ENCODE measurements at regions of chr7 and their contacts with region 1.

Region 1: DNA sequence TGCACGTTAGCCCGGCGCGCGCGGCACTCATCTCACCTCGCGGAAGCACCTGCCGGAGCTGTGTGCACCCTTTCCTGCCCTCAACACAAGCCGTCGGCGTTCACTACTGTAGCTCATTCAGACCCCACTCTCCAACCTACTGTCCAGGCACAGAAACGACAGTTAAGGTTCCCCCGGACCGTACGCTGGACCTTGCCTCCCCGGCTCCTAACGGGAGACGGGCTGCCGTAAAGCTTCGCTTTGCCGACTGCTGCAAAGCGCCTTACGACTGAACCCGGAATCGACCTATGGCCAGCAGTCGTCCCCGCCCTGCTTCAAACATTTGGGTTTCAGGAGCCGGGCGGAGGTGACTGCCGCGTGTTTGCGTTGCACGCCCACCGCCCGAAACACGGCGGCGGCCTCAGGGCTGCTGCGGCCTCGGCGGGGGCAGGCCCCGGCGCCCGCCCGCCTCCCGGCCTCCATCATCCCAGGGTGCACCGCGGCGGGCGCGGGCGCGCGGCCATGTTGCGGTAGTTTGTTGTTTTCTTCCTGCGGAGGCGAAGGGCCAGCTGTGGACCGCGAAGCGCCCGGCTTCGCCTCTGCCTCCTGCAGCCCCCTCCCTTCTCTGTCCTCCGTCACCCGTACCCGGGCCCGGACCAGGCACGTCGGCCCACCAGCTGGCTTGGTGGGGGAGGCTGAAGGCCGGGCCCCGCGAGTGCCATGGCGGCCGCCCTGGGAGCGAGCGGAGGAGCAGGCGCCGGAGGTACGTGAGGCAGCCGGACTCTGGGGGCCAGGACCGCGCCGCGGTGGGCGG is at the start of gene RBM33:
- DNase-seq: peak; percentile 89
- ATAC-seq: peak; percentile 92
- H3K4me3 Mint-ChIP-seq: peak within 1 kb of the TSS; percentile 96
- H3K27ac Mint-ChIP-seq: peak within 1 kb of the TSS; percentile 100
- H3K4me1 Mint-ChIP-seq: peaks cover 44% of the 10 kb centered on the region
- H3K27me3 Mint-ChIP-seq: no peaks in the 10 kb centered on the region
- total RNA-seq, gene RBM33: 67.6 to 81.1 TPM

Region 2: GRCh38 chr7:155205368-155206317 is 438.7 kb before region 1 on chr7:
- CTCF ChIA-PET with region 1: no interaction called
- POLR2A ChIA-PET with region 1: no interaction called
- intact Hi-C with region 1: loop called in 1 of 2 experiments (anchors 1 kb)
- DNase-seq: peak; percentile 95
- ATAC-seq: peak; percentile 84
- H3K4me3 Mint-ChIP-seq: peak overlapping the region; percentile 77
- H3K27ac Mint-ChIP-seq: peak overlapping the region; percentile 100
- H3K4me1 Mint-ChIP-seq: peaks cover 60% of the 10 kb centered on the region
- H3K27me3 Mint-ChIP-seq: no peaks in the 10 kb centered on the region

Region 3: GRCh38 chr7:155660059-155660757 is 15.8 kb after region 1 on chr7:
- CTCF ChIA-PET with region 1: interaction called, 5 read pairs
- POLR2A ChIA-PET with region 1: no interaction called
- intact Hi-C with region 1: loop called (anchors 1 to 2 kb)
- DNase-seq: peak; percentile 19
- ATAC-seq: peak; percentile 88
- H3K4me3 Mint-ChIP-seq: peak overlapping the region; percentile 28
- H3K27ac Mint-ChIP-seq: peak overlapping the region; percentile 77
- H3K4me1 Mint-ChIP-seq: peaks cover 79% of the 10 kb centered on the region
- H3K27me3 Mint-ChIP-seq: no peaks in the 10 kb centered on the region

Region 4: GRCh38 chr7:155763691-155764437 is 119.5 kb after region 1 on chr7:
- CTCF ChIA-PET with region 1: interaction called, 3 read pairs
- POLR2A ChIA-PET with region 1: no interaction called
- intact Hi-C with region 1: loop called (anchors 1 to 5 kb)
- DNase-seq: peak; percentile 84
- ATAC-seq: peak; percentile 83
- H3K4me3 Mint-ChIP-seq: peak overlapping the region; percentile 74
- H3K27ac Mint-ChIP-seq: peak overlapping the region; percentile 97
- H3K4me1 Mint-ChIP-seq: peaks cover 52% of the 10 kb centered on the region
- H3K27me3 Mint-ChIP-seq: no peaks in the 10 kb centered on the region

Region 5: DNA sequence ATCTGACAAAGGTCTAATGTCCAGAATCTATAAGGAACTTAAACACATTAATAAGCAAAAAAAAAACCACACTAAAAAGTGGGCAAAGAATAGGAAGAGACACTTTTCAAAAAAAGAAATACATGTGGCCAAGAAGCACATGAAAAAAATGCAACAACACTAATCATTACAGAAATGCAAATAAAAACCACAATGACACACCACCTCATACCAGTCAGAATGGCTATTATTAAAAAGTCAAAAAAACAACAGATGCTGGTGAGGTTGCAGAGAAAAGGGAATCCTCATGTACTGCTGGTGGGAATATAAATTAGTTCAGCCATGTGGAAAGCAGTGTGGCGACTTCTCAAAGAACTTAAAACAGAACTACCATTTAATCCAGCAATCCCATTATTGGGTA is 1129.6 kb after region 1 on chr7:
- CTCF ChIA-PET with region 1: no interaction called
- POLR2A ChIA-PET with region 1: no interaction called
- intact Hi-C with region 1: loop called in 1 of 2 experiments (anchors 10 kb)
- DNase-seq: no peak
- ATAC-seq: no peak
- H3K4me3 Mint-ChIP-seq: no peak overlapping the region
- H3K27ac Mint-ChIP-seq: no peak overlapping the region
- H3K4me1 Mint-ChIP-seq: peaks cover 58% of the 10 kb centered on the region
- H3K27me3 Mint-ChIP-seq: no peaks in the 10 kb centered on the region

Region 6: GRCh38 chr7:157138424-157139110 is 1494.2 kb after region 1 on chr7 and contains the start of gene UBE3C:
- CTCF ChIA-PET with region 1: no interaction called
- POLR2A ChIA-PET with region 1: no interaction called
- intact Hi-C with region 1: loop called in 1 of 2 experiments (anchors 2 kb)
- DNase-seq: peak; percentile 94
- ATAC-seq: peak; percentile 87
- H3K4me3 Mint-ChIP-seq: peak within 1 kb of the TSS; percentile 84
- H3K27ac Mint-ChIP-seq: peak within 1 kb of the TSS; percentile 89
- H3K4me1 Mint-ChIP-seq: peaks cover 41% of the 10 kb centered on the region
- H3K27me3 Mint-ChIP-seq: no peaks in the 10 kb centered on the region
- total RNA-seq, gene UBE3C: 53.9 to 60.7 TPM

Measured in activated CD4-positive, alpha-beta T cell treated with anti-CD3 and anti-CD28 coated beads for 36 hours (primary cell).